CD8-positive, alpha-beta T cell (primary cell): ENCODE measurements at regions of chr2 and their contacts with region 1.

Region 1: GRCh38 chr2:28346587-28346986 is 46.1 kb upstream of the FOSL2 start:
- DNase-seq: peak in 1 of 9 experiments; percentile 6
- ATAC-seq: no peak
- H3K4me3 ChIP-seq: no peak overlapping the region
- H3K4me3 Mint-ChIP-seq: no peak overlapping the region
- H3K27ac ChIP-seq: no peak overlapping the region
- H3K27ac Mint-ChIP-seq: peak overlapping the region; percentile 60
- H3K4me1 ChIP-seq: peaks cover 25% of the 10 kb centered on the region
- H3K4me1 Mint-ChIP-seq: peaks cover 26% of the 10 kb centered on the region
- H3K27me3 ChIP-seq: no peaks in the 10 kb centered on the region
- H3K27me3 Mint-ChIP-seq: no peaks in the 10 kb centered on the region
- CTCF ChIP-seq: no peak

Region 2: DNA sequence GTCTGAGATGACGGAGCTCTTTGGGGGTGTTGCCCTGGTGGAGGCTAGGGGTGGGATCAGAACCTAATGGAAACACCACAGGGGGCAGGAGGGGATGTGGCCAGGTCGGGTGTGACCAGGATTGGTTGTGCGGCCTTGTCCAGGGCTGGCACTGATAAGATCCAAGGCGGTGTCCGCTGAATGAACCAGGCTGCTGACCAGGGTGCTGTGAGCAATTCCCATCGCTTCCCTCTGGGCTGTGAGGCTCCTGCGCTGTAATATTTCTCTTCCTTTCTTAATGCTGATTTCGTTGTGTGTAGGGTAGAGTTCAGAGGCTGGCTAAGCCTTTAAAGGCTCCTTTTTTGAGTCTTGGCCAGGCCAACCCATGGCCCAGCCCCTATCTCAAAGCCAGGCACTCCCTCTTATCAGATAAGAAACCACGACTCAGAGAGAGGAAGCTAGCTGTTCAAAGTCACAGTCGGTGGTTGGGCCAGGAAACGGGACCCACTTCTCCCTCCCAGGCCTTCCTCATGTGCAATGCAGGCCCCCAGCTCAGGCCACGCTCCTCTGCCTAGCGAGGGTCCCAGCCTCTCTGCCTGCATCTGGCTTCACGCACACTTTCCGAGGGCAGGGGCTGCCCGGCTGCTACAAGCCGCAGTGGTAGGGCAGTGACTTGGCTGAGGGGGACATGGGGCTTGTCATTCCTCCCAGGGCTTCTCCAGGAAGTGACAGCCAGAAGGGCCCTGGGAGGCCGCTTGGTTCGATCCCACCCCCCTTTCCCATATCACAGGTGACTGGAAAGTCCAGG is 20.1 kb after region 1 on chr2:
- CTCF ChIA-PET with region 1: no interaction called
- POLR2A ChIA-PET with region 1: interaction called, 3 read pairs
- intact Hi-C with region 1: loop called in 1 of 2 experiments (anchors 2 kb)
- DNase-seq: peak; percentile 37 to 88 (median 66)
- ATAC-seq: peak; percentile 89
- H3K4me3 ChIP-seq: peak overlapping the region; percentile 3 to 30
- H3K4me3 Mint-ChIP-seq: peak overlapping the region; percentile 66
- H3K27ac ChIP-seq: peak overlapping the region; percentile 21 to 63
- H3K27ac Mint-ChIP-seq: peak overlapping the region; percentile 74
- H3K4me1 ChIP-seq: peaks cover 45% of the 10 kb centered on the region
- H3K4me1 Mint-ChIP-seq: peaks cover 45% of the 10 kb centered on the region
- H3K27me3 ChIP-seq: no peaks in the 10 kb centered on the region
- H3K27me3 Mint-ChIP-seq: peaks cover 4% of the 10 kb centered on the region
- CTCF ChIP-seq: no peak